H1 (cell line): ENCODE measurements at regions of chr14 and their contacts with region 1.

Region 1: DNA sequence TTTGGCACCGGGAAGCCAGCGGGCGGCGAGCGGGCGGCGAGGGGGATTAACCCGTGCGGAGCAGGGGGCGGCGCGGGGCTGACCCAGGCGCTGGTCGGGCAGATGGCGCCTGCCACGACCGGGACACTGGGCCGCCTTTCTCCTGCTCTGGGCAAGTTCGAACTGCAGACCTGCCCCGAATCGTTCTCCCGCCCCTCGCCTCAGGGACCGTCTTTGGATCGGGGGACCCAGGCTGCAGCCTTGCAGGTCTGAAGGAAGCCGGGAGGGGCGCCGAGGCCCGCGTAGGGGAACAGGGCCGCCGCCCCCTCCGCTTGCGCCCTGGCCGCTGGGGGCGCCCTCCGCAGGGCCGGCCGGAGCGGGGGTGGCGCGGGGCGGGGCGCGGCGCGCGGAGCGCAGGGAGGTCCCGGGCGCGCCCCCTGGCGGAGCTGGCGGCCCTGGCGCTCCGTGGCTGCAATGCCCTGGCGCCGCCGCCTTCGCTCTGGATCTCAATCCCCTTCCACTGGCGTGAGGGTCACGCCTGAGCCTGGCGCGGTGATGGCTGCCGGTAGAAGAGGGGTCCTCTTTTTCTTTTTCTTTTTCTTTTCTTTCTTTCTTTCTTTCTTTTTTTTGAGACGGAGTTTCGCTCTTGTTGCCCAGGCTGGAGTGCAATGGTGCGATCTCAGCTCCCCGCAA is 449 bp upstream of the LTBP2 start:
- DNase-seq: peak; percentile 51 to 93
- H3K4me3 ChIP-seq: peak overlapping the region; percentile 38 to 70 (median 56)
- H3K27ac ChIP-seq: no peak overlapping the region
- H3K4me1 ChIP-seq: peaks cover 4 to 10% (median 6%) of the 10 kb centered on the region in 4 experiments; a peak in 6 of 7 replicates
- H3K27me3 ChIP-seq: peaks cover 28 to 35% (median 32%) of the 10 kb centered on the region in 4 experiments
- CTCF ChIP-seq: peak; percentile 78 to 99 (median 86)
- EP300 ChIP-seq: no peak; a peak in 1 of 3 replicates
- POLR2A ChIP-seq: no peak
- RAD21 ChIP-seq: peak; percentile 21 to 55; a peak in 3 of 4 replicates

Region 2: GRCh38 chr14:74552623-74553022 is 59.9 kb before region 1 on chr14:
- CTCF ChIA-PET with region 1: interaction called, 12 read pairs
- POLR2A ChIA-PET with region 1: no interaction called
- DNase-seq: no peak
- H3K4me3 ChIP-seq: no peak overlapping the region
- H3K27ac ChIP-seq: no peak overlapping the region
- H3K4me1 ChIP-seq: peaks cover 0 to 13% (median 6%) of the 10 kb centered on the region in 4 experiments; a peak in 6 of 7 replicates
- H3K27me3 ChIP-seq: no peaks in the 10 kb centered on the region
- CTCF ChIP-seq: no peak
- EP300 ChIP-seq: no peak
- POLR2A ChIP-seq: no peak
- RAD21 ChIP-seq: no peak

Region 3: DNA sequence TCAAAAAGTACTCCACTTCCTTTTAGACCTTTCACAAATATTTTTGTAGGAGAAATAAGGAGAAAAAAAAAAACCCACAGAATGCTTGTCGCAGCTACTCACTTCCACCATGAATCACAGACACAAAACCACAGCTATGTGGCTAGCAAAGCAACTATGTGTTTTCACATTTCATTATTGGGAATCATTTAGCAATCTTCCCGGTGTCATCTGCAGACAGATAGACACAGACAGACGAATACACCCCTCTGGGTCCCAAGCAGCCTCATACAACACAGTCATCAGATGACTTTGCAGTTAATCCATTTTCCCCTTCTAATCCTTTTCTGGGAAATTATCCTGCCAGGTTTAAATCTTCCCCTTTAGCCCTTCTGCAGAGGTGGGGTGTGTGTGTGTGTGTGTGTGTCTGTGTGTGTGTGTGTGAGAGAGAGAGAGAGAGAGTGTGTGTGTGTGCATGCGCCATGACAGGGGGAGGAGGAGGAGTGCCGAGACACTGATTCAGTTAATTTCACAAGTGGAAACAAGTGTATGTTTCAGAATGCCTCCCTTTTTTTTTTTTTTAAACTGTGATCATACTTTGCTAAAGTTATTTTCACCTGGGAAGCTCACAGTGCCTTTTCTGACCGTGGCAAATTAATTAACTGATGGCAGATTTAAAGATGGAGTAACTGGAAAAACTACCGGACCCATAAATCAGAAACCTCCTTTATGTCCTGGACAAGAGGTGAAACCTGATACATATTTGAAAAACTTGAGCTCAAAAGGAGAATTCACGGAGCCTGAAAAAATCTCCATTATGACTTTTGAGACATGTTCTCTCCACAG is 40.4 kb before region 1 on chr14:
- CTCF ChIA-PET with region 1: interaction called, 30 read pairs
- POLR2A ChIA-PET with region 1: no interaction called
- DNase-seq: no peak
- H3K4me3 ChIP-seq: no peak overlapping the region
- H3K27ac ChIP-seq: no peak overlapping the region
- H3K4me1 ChIP-seq: peaks cover 0 to 7% (median 5%) of the 10 kb centered on the region in 4 experiments; a peak in 5 of 7 replicates
- H3K27me3 ChIP-seq: no peaks in the 10 kb centered on the region
- CTCF ChIP-seq: no peak
- EP300 ChIP-seq: no peak
- POLR2A ChIP-seq: no peak
- RAD21 ChIP-seq: no peak

Region 4: DNA sequence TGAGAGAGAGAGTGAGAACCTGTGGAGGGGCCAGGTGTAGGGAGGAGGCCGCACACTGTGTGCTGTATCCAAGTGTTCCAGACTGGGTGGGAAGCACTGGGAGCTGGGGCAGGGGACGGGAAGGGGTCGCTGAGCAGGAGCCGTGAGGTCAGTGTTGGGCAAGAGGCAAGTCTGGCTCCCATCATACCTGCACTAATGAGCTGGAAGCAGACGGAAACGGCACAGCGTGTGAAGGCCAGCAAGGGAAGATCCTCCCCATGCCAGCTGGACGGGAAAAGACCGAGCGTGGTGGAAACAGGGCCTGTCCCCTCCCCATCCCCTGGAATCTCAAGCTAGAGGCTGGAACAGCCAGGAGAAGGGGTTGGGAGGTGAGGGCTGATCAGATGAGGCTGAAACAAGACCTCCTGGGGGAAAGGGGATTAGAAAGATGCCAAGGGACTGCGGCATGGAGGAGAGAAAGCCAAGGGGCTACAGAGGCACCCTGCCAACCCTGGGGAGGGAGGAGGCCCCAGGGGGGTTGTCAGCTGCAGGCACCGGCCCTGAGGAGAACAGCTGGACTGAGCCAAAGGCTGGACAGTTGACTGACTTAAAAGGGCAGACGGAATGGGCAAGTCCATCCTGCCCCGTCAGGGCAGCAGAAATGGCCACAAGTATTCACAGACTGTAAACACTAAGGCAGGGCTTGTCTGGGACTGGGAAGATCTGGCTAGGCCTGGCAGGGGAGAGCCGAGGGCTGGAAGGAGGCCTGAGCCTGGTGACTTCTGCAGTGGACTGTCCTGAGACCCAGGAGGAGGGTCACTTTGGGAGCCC is 18.6 kb after region 1 on chr14:
- CTCF ChIA-PET with region 1: interaction called, 82 read pairs
- POLR2A ChIA-PET with region 1: interaction called, 7 read pairs
- DNase-seq: no peak
- H3K4me3 ChIP-seq: no peak overlapping the region
- H3K27ac ChIP-seq: no peak overlapping the region
- H3K4me1 ChIP-seq: peaks cover 0 to 5% (median 2%) of the 10 kb centered on the region in 4 experiments; a peak in 5 of 7 replicates
- H3K27me3 ChIP-seq: no peaks in the 10 kb centered on the region
- CTCF ChIP-seq: no peak
- EP300 ChIP-seq: no peak
- POLR2A ChIP-seq: no peak
- RAD21 ChIP-seq: no peak

Region 5: DNA sequence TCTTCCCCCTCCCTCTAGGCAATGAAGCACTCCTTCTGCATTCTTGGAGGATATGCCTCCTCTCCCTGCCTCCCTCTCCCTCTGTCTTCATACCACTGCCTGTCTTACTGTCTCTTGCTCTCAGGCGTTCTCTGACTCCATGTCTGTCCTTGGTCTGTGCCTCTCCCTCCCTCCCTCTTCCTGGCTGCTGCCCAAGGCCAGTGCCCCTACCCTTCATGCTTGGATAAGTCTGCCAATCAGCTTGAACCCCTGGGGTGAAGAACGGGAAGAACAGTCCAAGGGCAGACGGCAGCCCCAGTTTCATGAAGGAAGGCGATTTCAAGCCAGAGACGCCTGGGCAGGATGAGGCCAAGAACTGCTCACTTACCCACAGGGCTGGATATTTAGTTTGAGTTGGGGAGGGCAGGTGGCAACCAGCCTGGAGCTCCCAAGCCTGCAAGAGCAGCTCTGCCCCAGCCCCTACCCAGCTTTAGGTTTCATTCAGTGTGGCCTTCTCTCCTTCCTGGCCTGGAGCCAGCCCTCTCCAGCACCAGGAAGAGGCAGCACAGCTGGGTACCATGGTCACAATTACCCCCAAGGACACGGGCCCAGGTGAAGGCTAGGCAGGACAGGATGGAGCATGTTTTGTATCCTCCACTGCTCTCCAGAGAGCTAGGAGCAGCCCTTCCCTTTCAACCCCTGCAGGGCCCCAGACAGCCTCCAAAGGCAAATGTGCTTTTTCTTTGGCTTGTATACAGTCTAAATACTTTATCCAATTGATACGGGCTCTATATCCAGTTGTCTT is 35.4 kb after region 1 on chr14:
- CTCF ChIA-PET with region 1: interaction called, 87 read pairs
- POLR2A ChIA-PET with region 1: interaction called, 7 read pairs
- DNase-seq: no peak
- H3K4me3 ChIP-seq: no peak overlapping the region
- H3K27ac ChIP-seq: no peak overlapping the region
- H3K4me1 ChIP-seq: peaks cover 0 to 11% (median 4%) of the 10 kb centered on the region in 4 experiments; a peak in 5 of 7 replicates
- H3K27me3 ChIP-seq: no peaks in the 10 kb centered on the region
- CTCF ChIP-seq: no peak
- EP300 ChIP-seq: no peak
- POLR2A ChIP-seq: no peak
- RAD21 ChIP-seq: no peak

Region 6: DNA sequence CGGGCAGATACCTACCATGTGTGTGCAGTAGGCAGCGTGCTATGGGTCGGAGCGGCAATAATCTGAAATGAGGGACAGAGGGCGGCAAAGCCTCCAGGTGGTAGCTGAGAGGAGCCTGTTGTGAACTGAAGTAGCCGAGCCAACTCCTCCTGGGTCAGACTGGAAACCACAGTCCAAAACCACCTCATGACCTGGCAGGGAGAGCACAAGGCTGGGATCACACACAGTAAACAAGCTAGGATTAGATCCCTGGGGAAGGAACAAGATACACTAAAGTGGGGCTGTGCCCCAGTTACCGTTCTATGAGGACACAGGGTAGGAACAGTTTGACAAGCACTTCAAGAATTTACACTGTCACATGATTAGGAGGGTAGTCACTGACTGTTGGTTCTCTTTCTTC is 51.4 kb after region 1 on chr14:
- CTCF ChIA-PET with region 1: interaction called, 18 read pairs
- POLR2A ChIA-PET with region 1: no interaction called
- DNase-seq: no peak
- H3K4me3 ChIP-seq: no peak overlapping the region
- H3K27ac ChIP-seq: no peak overlapping the region
- H3K4me1 ChIP-seq: no peaks in the 10 kb centered on the region
- H3K27me3 ChIP-seq: no peaks in the 10 kb centered on the region
- CTCF ChIP-seq: no peak
- EP300 ChIP-seq: no peak
- POLR2A ChIP-seq: no peak
- RAD21 ChIP-seq: no peak

Region 7: GRCh38 chr14:74771399-74771798 is 158.9 kb after region 1 on chr14:
- CTCF ChIA-PET with region 1: no interaction called
- POLR2A ChIA-PET with region 1: no interaction called
- DNase-seq: no peak
- H3K4me3 ChIP-seq: no peak overlapping the region
- H3K27ac ChIP-seq: no peak overlapping the region
- H3K4me1 ChIP-seq: no peaks in the 10 kb centered on the region; a peak in 1 of 7 replicates
- H3K27me3 ChIP-seq: no peaks in the 10 kb centered on the region
- CTCF ChIP-seq: no peak
- EP300 ChIP-seq: no peak
- POLR2A ChIP-seq: no peak
- RAD21 ChIP-seq: no peak

Region 8: GRCh38 chr14:74804219-74804826 is 191.8 kb after region 1 on chr14:
- CTCF ChIA-PET with region 1: interaction called, 19 read pairs
- POLR2A ChIA-PET with region 1: no interaction called
- DNase-seq: no peak
- H3K4me3 ChIP-seq: no peak overlapping the region
- H3K27ac ChIP-seq: no peak overlapping the region
- H3K4me1 ChIP-seq: no peaks in the 10 kb centered on the region
- H3K27me3 ChIP-seq: no peaks in the 10 kb centered on the region
- CTCF ChIP-seq: peak in 2 of 3 experiments; percentile 52 to 66; a peak in 3 of 4 replicates
- EP300 ChIP-seq: no peak
- POLR2A ChIP-seq: no peak
- RAD21 ChIP-seq: peak; percentile 67 to 73